CD8-positive, alpha-beta T cell (primary cell): ENCODE measurements at regions of chr1 and their contacts with region 1.

Region 1: GRCh38 chr1:116724765-116725375 is 29.4 kb upstream of the CD2 start:
- DNase-seq: peak; percentile 52 to 86 (median 81)
- ATAC-seq: peak; percentile 75
- H3K4me3 ChIP-seq: no peak overlapping the region
- H3K4me3 Mint-ChIP-seq: no peak overlapping the region
- H3K27ac ChIP-seq: no peak overlapping the region
- H3K27ac Mint-ChIP-seq: no peak overlapping the region
- H3K4me1 ChIP-seq: no peaks in the 10 kb centered on the region
- H3K4me1 Mint-ChIP-seq: peaks cover 15% of the 10 kb centered on the region
- H3K27me3 ChIP-seq: no peaks in the 10 kb centered on the region
- H3K27me3 Mint-ChIP-seq: no peaks in the 10 kb centered on the region
- CTCF ChIP-seq: peak; percentile 97

Region 2: DNA sequence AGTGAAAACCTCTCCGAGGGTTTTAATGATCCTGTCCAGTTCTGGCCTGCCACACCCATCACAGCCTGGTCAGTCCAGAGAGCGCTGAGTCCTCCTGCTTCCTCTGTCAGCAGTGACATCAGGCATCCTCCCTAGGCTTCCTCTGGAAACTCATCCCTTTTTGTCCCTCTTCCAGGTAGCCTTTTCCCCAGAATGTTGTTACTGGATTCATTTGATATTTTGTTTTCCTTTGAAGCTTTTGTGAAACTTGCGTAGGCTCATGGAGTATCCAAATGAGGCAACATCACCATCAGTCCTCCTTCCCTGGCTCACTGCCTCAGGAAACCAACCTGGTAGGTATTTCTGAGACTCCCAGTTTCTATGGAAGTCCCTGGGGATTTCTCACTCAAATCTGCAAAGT is 30.3 kb before region 1 on chr1:
- CTCF ChIA-PET with region 1: no interaction called
- POLR2A ChIA-PET with region 1: no interaction called
- intact Hi-C with region 1: no loop called
- DNase-seq: no peak
- ATAC-seq: no peak
- H3K4me3 ChIP-seq: no peak overlapping the region
- H3K4me3 Mint-ChIP-seq: no peak overlapping the region
- H3K27ac ChIP-seq: no peak overlapping the region
- H3K27ac Mint-ChIP-seq: no peak overlapping the region
- H3K4me1 ChIP-seq: no peaks in the 10 kb centered on the region
- H3K4me1 Mint-ChIP-seq: no peaks in the 10 kb centered on the region
- H3K27me3 ChIP-seq: peaks cover 0 to 2% of the 10 kb centered on the region in 2 experiments
- H3K27me3 Mint-ChIP-seq: peaks cover 3% of the 10 kb centered on the region
- CTCF ChIP-seq: no peak

Region 3: DNA sequence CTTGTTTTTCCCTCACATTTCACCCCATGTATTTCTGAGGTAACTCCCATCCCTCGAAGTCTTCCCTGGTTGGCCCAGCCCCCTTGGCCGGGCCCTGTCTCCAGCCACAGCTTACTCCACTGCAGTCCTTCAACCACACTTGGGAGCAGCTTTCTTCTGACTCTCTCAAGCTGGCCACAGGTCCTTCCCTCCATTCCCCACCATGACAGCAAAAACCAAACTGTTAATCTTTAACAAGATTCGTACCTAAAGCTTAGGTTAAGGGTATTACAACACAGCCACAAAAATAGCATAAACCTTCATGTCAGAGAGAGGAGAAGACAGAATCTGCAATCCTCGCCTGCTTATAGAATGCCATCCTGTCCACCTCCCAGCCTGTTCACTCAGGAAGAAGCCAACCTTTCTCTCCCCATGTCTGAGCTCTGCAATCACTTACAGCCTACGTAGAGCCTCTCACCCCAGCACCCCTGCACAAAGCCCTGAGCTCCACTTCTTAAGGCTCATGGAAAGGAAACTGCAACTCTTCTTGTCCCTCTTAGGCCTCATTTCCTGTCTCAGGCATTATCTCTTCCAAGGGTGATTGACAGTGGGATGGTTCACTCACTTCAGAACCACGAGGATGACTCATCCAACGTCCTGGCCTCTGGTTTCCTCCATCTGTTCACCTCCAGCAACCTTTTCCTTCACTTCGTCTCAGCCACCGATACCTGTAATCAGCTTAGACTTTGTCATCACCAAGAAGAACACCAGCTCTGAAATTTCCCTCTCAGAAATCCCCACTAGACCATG is 102.1 kb after region 1 on chr1:
- CTCF ChIA-PET with region 1: interaction called, 16 read pairs
- POLR2A ChIA-PET with region 1: no interaction called
- intact Hi-C with region 1: no loop called
- DNase-seq: peak in 5 of 9 experiments; percentile 18 to 54 (median 37)
- ATAC-seq: peak; percentile 71
- H3K4me3 ChIP-seq: no peak overlapping the region
- H3K4me3 Mint-ChIP-seq: no peak overlapping the region
- H3K27ac ChIP-seq: no peak overlapping the region
- H3K27ac Mint-ChIP-seq: peak overlapping the region; percentile 21
- H3K4me1 ChIP-seq: peaks cover 4% of the 10 kb centered on the region
- H3K4me1 Mint-ChIP-seq: peaks cover 13% of the 10 kb centered on the region
- H3K27me3 ChIP-seq: no peaks in the 10 kb centered on the region
- H3K27me3 Mint-ChIP-seq: no peaks in the 10 kb centered on the region
- CTCF ChIP-seq: no peak

Region 4: DNA sequence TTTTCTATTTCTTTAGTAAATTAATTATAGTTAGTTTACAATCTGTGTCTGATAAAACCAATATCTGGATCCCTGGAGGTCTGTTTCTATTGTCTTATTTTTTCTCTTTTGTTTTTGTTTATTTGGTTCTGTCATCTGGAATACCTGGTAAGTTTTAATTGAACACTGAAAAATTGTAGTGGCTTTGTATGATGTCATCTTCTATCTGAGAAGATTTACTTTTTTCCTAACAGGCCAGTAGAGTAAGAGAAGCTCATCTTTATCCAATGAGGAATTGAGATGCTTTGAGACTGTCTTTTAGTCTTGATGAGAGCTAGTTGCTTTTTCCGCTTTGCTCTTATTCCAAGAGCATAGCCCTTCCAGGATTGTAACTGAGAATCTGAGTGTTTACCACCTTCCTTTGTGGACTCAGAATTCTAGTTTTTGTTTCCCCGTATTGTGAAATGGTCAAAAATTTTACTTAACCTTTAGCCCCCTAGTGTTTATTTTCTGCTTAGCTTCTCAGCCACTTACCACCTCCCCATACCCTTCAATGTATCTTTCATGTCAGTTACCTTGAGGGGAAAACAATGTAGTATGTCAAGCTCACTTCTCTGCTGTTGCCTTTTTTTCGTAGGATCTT is 209.8 kb after region 1 on chr1:
- CTCF ChIA-PET with region 1: interaction called, 8 read pairs
- POLR2A ChIA-PET with region 1: no interaction called
- intact Hi-C with region 1: loop called in 1 of 2 experiments (anchors 1 kb)
- DNase-seq: peak in 2 of 9 experiments; percentile 43 to 58
- ATAC-seq: peak; percentile 21
- H3K4me3 ChIP-seq: no peak overlapping the region
- H3K4me3 Mint-ChIP-seq: no peak overlapping the region
- H3K27ac ChIP-seq: no peak overlapping the region
- H3K27ac Mint-ChIP-seq: no peak overlapping the region
- H3K4me1 ChIP-seq: peaks cover 22% of the 10 kb centered on the region
- H3K4me1 Mint-ChIP-seq: peaks cover 23% of the 10 kb centered on the region
- H3K27me3 ChIP-seq: no peaks in the 10 kb centered on the region
- H3K27me3 Mint-ChIP-seq: no peaks in the 10 kb centered on the region
- CTCF ChIP-seq: peak; percentile 32

Region 5: GRCh38 chr1:117128323-117129079 is 403.6 kb after region 1 on chr1:
- CTCF ChIA-PET with region 1: interaction called, 6 read pairs
- POLR2A ChIA-PET with region 1: interaction called, 3 read pairs
- intact Hi-C with region 1: loop called (anchors 2 kb)
- DNase-seq: peak in 2 of 9 experiments; percentile 36 to 55
- ATAC-seq: peak; percentile 38
- H3K4me3 ChIP-seq: no peak overlapping the region
- H3K4me3 Mint-ChIP-seq: no peak overlapping the region
- H3K27ac ChIP-seq: no peak overlapping the region
- H3K27ac Mint-ChIP-seq: no peak overlapping the region
- H3K4me1 ChIP-seq: no peaks in the 10 kb centered on the region
- H3K4me1 Mint-ChIP-seq: peaks cover 2% of the 10 kb centered on the region
- H3K27me3 ChIP-seq: peaks cover 0 to 5% of the 10 kb centered on the region in 2 experiments
- H3K27me3 Mint-ChIP-seq: peaks cover 8% of the 10 kb centered on the region
- CTCF ChIP-seq: peak; percentile 54